ENCODE measurements at regions of chr20 and their contacts with region 1.

Region 1: GRCh38 chr20:2172305-2173175 is 70.9 kb downstream of the STK35 start:
- DNase-seq: peak; percentile 77
- CTCF ChIP-seq: peak; percentile 78

Region 2: GRCh38 chr20:1965520-1966351 is 206.8 kb before region 1 on chr20:
- CTCF ChIA-PET with region 1: interaction called, 35 read pairs
- POLR2A ChIA-PET with region 1: no interaction called
- DNase-seq: peak; percentile 84
- CTCF ChIP-seq: peak; percentile 91

Region 3: GRCh38 chr20:2146080-2146867 is 26.3 kb before region 1 on chr20:
- CTCF ChIA-PET with region 1: interaction called, 16 read pairs
- POLR2A ChIA-PET with region 1: no interaction called
- DNase-seq: no peak
- CTCF ChIP-seq: no peak

Region 4: GRCh38 chr20:2162125-2162822 is 10.3 kb before region 1 on chr20:
- CTCF ChIA-PET with region 1: interaction called, 38 read pairs
- POLR2A ChIA-PET with region 1: no interaction called
- DNase-seq: no peak
- CTCF ChIP-seq: no peak

Measured in GM10248 (cell line).